HAP-1 (cell line): ENCODE measurements at regions of chr19 and their contacts with region 1.

Region 1: GRCh38 chr19:46860125-46860845 is 512 bp upstream of the ARHGAP35 start:
- DNase-seq: peak; percentile 97 to 100
- H3K4me3 ChIP-seq: peak overlapping the region; percentile 65
- H3K4me1 ChIP-seq: peaks cover 20% of the 10 kb centered on the region
- H3K27me3 ChIP-seq: no peaks in the 10 kb centered on the region

Region 2: GRCh38 chr19:46924874-46925547 is 64.7 kb after region 1 on chr19:
- in situ Hi-C with region 1: loop called (anchors 5 kb)
- DNase-seq: no peak
- H3K4me3 ChIP-seq: no peak overlapping the region
- H3K4me1 ChIP-seq: peaks cover 32% of the 10 kb centered on the region
- H3K27me3 ChIP-seq: no peaks in the 10 kb centered on the region

Region 3: DNA sequence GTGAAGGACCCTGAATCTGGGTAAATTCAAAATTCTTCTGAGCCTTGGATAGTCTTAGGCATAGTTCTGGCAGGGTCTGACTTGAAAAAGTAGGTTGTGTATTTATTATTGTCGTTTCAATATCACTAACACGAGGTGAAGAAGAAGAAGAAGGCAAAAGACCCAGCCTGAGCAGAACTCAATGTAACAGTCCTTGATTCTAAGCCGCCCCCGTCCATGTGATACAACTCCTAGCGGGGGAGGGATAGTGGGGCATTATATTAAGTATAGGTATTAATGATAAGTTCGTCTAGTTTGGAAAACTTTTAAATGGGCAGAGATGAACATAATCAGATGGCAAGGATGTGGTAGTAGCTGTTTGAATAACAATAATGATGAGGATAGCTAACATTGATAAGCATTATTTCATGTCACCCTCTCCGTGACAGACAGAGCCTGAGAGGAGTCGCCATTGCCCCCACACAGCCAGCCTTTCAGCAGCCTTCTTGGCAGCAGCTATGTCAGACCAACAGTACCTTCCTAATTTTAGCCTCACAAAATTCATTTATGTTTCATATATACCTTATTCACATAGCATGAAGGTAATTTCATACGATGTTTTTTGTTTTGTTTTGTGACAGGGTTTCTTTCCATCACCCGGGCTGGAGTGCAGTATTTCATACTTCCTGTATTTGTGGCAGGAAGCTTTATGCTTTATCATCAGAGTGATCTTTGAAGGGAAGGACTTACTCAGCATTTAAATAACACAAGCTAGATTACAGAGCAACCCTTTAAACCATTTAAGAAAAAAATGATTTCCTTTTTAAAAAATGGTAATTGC is 94.9 kb after region 1 on chr19:
- in situ Hi-C with region 1: no loop called
- DNase-seq: no peak
- H3K4me3 ChIP-seq: no peak overlapping the region
- H3K4me1 ChIP-seq: peaks cover 11% of the 10 kb centered on the region
- H3K27me3 ChIP-seq: no peaks in the 10 kb centered on the region

Region 4: DNA sequence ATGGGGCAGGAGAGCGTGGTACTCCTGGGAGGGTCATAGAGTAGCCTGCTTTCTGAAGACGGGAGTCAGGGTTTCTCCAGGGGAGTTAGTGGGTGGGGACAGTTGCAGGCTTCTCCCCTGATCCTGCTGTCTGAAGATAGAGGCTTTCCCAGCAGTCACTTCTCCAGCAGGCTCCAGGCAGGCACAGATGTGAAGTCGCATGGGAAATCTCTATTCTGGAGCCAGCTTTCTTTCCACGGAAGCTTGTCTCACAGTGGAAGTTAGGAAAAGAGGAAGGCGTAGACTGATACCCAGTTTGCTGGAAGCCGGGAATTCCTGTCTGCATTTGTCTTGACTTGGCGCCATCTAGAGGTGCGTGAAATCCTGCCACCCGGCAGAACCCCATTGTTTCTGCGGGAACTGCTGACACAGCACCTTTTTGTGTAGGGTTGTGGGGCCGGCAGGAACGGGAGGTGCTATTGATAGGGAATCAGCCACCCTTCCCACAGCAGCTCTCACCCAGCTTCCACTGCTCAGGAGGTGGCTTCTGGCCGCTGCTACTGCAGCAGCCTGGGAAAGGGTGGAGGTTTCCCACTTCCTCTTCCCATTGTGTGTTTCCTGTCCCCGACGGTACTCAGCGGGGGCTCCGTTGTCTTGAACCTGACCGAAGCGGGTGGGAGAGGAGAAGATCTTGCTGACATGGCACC is 130.8 kb after region 1 on chr19:
- in situ Hi-C with region 1: loop called (anchors 5 kb)
- DNase-seq: peak; percentile 66 to 86
- H3K4me3 ChIP-seq: no peak overlapping the region
- H3K4me1 ChIP-seq: no peaks in the 10 kb centered on the region
- H3K27me3 ChIP-seq: no peaks in the 10 kb centered on the region